Activated naive CD4-positive, alpha-beta T cell treated with anti-CD3 and anti-CD28 coated beads, Interleukin-2, amount 10 ng/mL, durations not matched to agents 7 days and 5 days (primary cell): ENCODE measurements at regions of chr19 and their contacts with region 1.

Region 1: DNA sequence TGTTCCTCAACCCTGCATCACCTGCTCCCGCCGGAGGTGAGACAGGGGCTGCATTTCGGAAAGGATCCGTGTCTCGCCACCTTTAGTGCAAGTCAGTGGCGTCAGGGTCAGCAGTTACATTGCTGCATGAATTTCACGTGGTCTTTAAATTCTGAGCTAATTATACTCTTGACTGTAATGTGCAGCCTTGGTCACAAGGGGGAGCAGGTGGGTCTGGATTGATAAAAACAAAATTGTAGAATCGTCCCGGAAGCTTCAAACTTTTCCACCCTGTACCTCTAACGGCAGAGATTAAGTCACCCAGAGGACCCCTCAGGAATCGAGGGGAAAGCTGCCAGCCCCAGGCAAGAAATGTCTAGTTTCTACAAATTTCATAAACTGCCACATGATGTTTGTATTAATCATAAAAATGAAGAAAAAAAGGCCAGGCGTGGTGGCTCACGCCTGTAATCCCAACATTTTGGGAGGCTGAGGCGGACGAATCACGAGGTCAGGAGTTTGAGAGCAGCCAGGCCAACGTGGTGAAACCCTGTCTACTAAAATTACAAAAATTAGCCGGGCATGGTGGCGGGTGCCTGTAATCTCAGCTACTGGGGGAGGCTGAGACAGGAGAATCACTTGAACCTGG is 20.2 kb downstream of the BBC3 start:
- DNase-seq: peak; percentile 88
- H3K4me3 Mint-ChIP-seq: no peak overlapping the region
- H3K27ac Mint-ChIP-seq: peak overlapping the region; percentile 86
- H3K4me1 Mint-ChIP-seq: peaks cover 19% of the 10 kb centered on the region
- H3K27me3 Mint-ChIP-seq: no peaks in the 10 kb centered on the region

Region 2: GRCh38 chr19:47013041-47013517 is 197.7 kb before region 1 on chr19:
- CTCF ChIA-PET with region 1: interaction called, 13 read pairs
- DNase-seq: peak; percentile 72
- H3K4me3 Mint-ChIP-seq: no peak overlapping the region
- H3K27ac Mint-ChIP-seq: no peak overlapping the region
- H3K4me1 Mint-ChIP-seq: peaks cover 4% of the 10 kb centered on the region
- H3K27me3 Mint-ChIP-seq: peaks cover 75% of the 10 kb centered on the region

Region 3: DNA sequence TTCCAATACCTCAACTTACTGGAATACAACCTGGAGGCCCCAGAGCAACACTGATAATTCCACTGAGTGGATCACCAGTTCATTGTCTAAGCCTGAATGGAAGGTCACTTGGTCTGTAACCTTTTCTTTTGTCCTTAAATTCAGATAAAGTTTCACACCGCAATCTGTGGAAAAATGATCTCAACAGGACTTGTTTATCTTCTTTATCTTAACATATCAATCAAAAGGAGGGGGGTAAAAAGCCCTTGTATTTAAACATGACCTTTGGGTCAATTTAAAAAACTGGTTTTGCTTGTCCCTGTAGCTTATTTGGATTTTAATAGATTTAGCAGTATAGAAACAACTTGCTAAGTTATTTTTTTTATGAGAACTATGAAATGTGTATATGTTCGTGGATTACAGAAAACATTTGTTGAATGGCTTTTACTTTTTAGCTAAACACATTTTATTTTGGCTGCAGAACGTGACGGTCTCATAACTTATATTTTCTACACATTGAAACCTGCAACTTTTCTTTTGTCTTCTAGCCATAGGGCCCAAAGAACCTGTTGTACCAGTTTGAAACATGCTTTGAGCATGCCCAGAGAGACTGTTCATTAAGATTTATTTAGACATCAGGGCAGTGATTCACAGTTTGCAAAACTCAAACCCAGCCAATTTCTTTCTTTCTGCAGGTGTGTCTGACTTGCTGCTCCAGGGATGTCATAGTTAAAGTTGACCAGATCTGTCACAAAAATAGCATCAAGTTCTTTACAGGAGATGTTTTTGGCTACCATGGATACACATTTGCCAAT is 58.4 kb before region 1 on chr19:
- CTCF ChIA-PET with region 1: interaction called, 17 read pairs
- DNase-seq: no peak
- H3K4me3 Mint-ChIP-seq: no peak overlapping the region
- H3K27ac Mint-ChIP-seq: no peak overlapping the region
- H3K4me1 Mint-ChIP-seq: peaks cover 47% of the 10 kb centered on the region
- H3K27me3 Mint-ChIP-seq: no peaks in the 10 kb centered on the region

Region 4: DNA sequence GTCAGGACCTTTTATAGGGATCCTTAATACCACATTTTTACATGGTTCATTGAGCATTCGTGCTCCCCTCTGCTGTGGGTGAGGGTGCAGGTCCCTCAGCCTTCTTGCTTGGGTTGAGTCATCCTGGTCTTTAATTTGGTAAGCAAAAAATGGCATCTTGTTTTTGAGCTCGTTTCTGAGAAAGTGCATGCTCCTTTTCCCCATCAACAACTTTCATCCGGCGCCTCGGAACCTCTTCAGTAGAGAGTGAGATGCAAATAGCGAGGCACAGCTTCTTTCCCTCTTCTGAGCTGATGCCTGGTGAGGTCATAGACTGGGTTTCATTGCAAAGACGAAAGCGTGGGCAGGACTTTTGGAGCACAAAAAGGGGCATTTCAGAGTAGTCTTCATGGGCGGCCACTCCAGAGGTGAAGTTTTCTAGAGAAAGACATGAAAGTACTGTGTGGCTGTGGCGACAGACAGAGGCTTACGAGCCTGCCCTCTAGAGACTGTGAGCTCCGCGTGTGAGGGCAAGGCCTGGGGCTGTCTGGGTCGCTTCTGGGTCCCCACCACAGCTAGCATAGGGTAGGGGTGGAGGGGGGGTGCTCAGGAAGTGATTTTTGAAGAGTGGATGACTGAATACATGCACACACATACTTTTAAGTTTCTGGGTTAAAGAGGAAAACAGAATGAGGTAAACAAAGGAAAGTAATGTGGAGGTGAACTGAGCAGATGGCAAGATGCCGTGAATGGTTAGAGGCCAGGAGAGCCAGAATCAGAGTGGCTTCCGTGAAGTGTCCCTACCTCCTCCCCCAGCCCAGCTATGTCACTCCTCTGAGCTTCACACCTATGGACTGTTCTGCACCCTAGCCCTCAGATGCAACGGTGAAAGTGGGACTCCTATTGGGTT is 24.1 kb before region 1 on chr19:
- CTCF ChIA-PET with region 1: interaction called, 26 read pairs
- DNase-seq: peak; percentile 84
- H3K4me3 Mint-ChIP-seq: peak overlapping the region; percentile 40
- H3K27ac Mint-ChIP-seq: peak overlapping the region; percentile 98
- H3K4me1 Mint-ChIP-seq: peaks cover 86% of the 10 kb centered on the region
- H3K27me3 Mint-ChIP-seq: no peaks in the 10 kb centered on the region

Region 5: DNA sequence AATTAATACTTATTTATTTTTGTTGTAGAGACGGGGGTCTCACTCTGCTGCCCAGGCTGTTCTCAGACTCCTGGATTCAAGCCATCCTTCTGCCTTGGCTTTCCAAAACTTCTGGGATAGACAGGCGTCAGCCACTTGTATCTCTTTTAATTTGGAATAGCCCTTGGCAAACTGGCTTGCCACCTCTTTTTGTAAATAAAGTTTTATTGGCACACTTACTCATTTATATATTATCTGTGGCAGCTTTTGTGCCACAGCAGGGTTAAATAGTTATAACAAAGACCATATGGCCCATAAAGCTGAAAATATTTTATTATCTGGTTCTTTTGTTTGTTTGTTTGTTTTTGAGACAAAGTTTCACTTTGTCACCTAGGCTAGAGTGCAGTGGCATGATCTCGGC is 10.3 kb before region 1 on chr19:
- CTCF ChIA-PET with region 1: interaction called, 16 read pairs
- DNase-seq: no peak
- H3K4me3 Mint-ChIP-seq: no peak overlapping the region
- H3K27ac Mint-ChIP-seq: no peak overlapping the region
- H3K4me1 Mint-ChIP-seq: peaks cover 9% of the 10 kb centered on the region
- H3K27me3 Mint-ChIP-seq: no peaks in the 10 kb centered on the region

Region 6: GRCh38 chr19:47225746-47226425 is 15.1 kb after region 1 on chr19:
- CTCF ChIA-PET with region 1: interaction called, 57 read pairs
- DNase-seq: peak; percentile 87
- H3K4me3 Mint-ChIP-seq: peak overlapping the region; percentile 74
- H3K27ac Mint-ChIP-seq: peak overlapping the region; percentile 85
- H3K4me1 Mint-ChIP-seq: peaks cover 20% of the 10 kb centered on the region
- H3K27me3 Mint-ChIP-seq: peaks cover 8% of the 10 kb centered on the region